Naive thymus-derived CD4-positive, alpha-beta T cell (primary cell): ENCODE measurements at regions of chr13 and their contacts with region 1.

Region 1: DNA sequence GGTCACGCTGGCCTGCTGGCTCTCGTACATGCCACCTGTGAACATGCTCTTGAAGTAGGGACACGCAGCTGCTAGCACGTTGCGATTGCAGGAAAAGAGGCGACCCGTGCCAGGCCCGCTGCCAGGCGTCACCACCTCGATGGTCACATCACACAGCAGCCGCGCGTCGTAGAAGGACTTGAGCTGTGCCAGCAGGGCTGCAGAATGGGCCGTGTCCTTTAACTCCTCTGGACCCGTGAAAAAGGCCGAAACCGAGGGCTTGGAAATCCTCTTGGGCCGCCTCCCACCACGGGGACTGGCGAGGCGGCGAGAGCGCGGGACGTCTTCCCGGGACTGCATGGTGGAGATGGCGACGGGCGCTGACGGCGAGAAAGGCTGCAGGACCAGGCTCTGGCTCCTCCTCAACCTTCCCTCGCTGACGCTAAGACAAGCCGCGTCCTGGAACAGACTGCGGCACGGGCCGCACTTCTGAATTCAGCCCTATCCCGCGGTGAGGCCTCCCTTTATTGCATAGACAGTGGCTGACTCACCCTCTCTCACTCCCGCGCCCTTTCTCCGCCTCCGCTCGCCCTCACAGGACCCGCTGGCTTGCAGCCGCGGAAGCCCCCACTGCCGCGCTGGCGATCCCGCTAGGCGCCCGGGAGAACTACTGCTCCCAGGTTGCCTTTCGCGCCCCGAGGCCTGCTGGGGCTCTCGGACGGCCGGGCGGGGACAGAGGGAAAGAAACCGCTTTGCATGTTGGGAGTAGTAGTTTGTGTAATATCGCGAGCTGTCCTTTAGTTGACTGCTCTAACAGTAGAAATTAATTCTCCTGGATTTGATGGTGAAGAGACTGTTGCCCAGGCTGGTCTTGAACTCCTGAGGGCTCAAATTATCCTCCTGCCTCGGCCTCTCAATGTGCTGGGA is at the start of gene KBTBD7:
- DNase-seq: peak; percentile 78 to 94 (median 83)
- ATAC-seq: peak; percentile 98
- H3K4me3 ChIP-seq: peak within 1 kb of the TSS; percentile 85
- H3K4me3 Mint-ChIP-seq: peak within 1 kb of the TSS; percentile 87 to 98 (median 94)
- H3K27ac ChIP-seq: peak within 1 kb of the TSS; percentile 70
- H3K27ac Mint-ChIP-seq: peak within 1 kb of the TSS; percentile 79 to 94 (median 90)
- H3K4me1 ChIP-seq: peaks cover 0 to 13% of the 10 kb centered on the region in 2 donors
- H3K4me1 Mint-ChIP-seq: peaks cover 25 to 50% (median 41%) of the 10 kb centered on the region in 7 donors
- H3K27me3 ChIP-seq: no peaks in the 10 kb centered on the region
- H3K27me3 Mint-ChIP-seq: no peaks in the 10 kb centered on the region
- total RNA-seq, gene KBTBD7: 2.8 to 12.9 (median 11.5) TPM

Region 2: GRCh38 chr13:39655569-39656324 is 1538.4 kb before region 1 on chr13 and contains the start of gene COG6:
- CTCF ChIA-PET with region 1: no interaction called
- POLR2A ChIA-PET with region 1: no interaction called
- intact Hi-C with region 1: loop called (anchors 1 to 10 kb)
- DNase-seq: peak; percentile 88 to 99 (median 94)
- ATAC-seq: peak; percentile 93
- H3K4me3 ChIP-seq: peak within 1 kb of the TSS; percentile 79
- H3K4me3 Mint-ChIP-seq: peak within 1 kb of the TSS; percentile 89 to 100 (median 96)
- H3K27ac ChIP-seq: peak within 1 kb of the TSS; percentile 79
- H3K27ac Mint-ChIP-seq: peak within 1 kb of the TSS; percentile 79 to 97 (median 90)
- H3K4me1 ChIP-seq: peaks cover 4 to 5% of the 10 kb centered on the region in 2 donors
- H3K4me1 Mint-ChIP-seq: peaks cover 19 to 46% (median 43%) of the 10 kb centered on the region in 7 donors
- H3K27me3 ChIP-seq: no peaks in the 10 kb centered on the region
- H3K27me3 Mint-ChIP-seq: peaks cover 0 to 14% (median 4%) of the 10 kb centered on the region in 5 donors
- total RNA-seq, gene COG6: 19.4 to 41.6 (median 32.3) TPM

Region 3: GRCh38 chr13:41075034-41075433 is 119.1 kb before region 1 on chr13:
- CTCF ChIA-PET with region 1: no interaction called
- POLR2A ChIA-PET with region 1: no interaction called
- intact Hi-C with region 1: loop called in 1 of 2 experiments (anchors 1 kb)
- DNase-seq: peak in 7 of 9 donors; percentile 15 to 58 (median 51)
- ATAC-seq: peak; percentile 63
- H3K4me3 ChIP-seq: no peak overlapping the region
- H3K4me3 Mint-ChIP-seq: no peak overlapping the region
- H3K27ac ChIP-seq: no peak overlapping the region
- H3K27ac Mint-ChIP-seq: no peak overlapping the region
- H3K4me1 ChIP-seq: no peaks in the 10 kb centered on the region
- H3K4me1 Mint-ChIP-seq: no peaks in the 10 kb centered on the region
- H3K27me3 ChIP-seq: no peaks in the 10 kb centered on the region
- H3K27me3 Mint-ChIP-seq: no peaks in the 10 kb centered on the region

Region 4: GRCh38 chr13:41132512-41133152 is 61.5 kb before region 1 on chr13 and contains the start of gene KBTBD6:
- CTCF ChIA-PET with region 1: interaction called, 3 read pairs
- POLR2A ChIA-PET with region 1: no interaction called
- intact Hi-C with region 1: loop called (anchors 1 kb)
- DNase-seq: peak; percentile 76 to 93 (median 87)
- ATAC-seq: peak; percentile 98
- H3K4me3 ChIP-seq: peak within 1 kb of the TSS; percentile 77
- H3K4me3 Mint-ChIP-seq: peak within 1 kb of the TSS; percentile 94 to 99 (median 98)
- H3K27ac ChIP-seq: peak within 1 kb of the TSS; percentile 67
- H3K27ac Mint-ChIP-seq: peak within 1 kb of the TSS; percentile 91 to 97 (median 93)
- H3K4me1 ChIP-seq: peaks cover 15 to 24% of the 10 kb centered on the region in 2 donors
- H3K4me1 Mint-ChIP-seq: peaks cover 32 to 60% (median 54%) of the 10 kb centered on the region in 7 donors
- H3K27me3 ChIP-seq: no peaks in the 10 kb centered on the region
- H3K27me3 Mint-ChIP-seq: no peaks in the 10 kb centered on the region
- total RNA-seq, gene KBTBD6: 3.9 to 9.2 (median 7.7) TPM